ENCODE measurements at regions of chr10 and their contacts with region 1.

Region 1: GRCh38 chr10:30583778-30584415 is 45.7 kb downstream of the LYZL2 start:
- DNase-seq: peak; percentile 9
- H3K4me3 Mint-ChIP-seq: no peak overlapping the region
- H3K27ac Mint-ChIP-seq: no peak overlapping the region
- H3K4me1 Mint-ChIP-seq: peaks cover 5% of the 10 kb centered on the region
- H3K27me3 Mint-ChIP-seq: peaks cover 3% of the 10 kb centered on the region

Region 2: GRCh38 chr10:30392564-30392990 is 191.3 kb before region 1 on chr10:
- CTCF ChIA-PET with region 1: interaction called, 99 read pairs
- POLR2A ChIA-PET with region 1: no interaction called
- intact Hi-C with region 1: no loop called
- DNase-seq: peak; percentile 84
- H3K4me3 Mint-ChIP-seq: peak overlapping the region; percentile 24
- H3K27ac Mint-ChIP-seq: no peak overlapping the region
- H3K4me1 Mint-ChIP-seq: peaks cover 2% of the 10 kb centered on the region
- H3K27me3 Mint-ChIP-seq: peaks cover 18% of the 10 kb centered on the region

Region 3: DNA sequence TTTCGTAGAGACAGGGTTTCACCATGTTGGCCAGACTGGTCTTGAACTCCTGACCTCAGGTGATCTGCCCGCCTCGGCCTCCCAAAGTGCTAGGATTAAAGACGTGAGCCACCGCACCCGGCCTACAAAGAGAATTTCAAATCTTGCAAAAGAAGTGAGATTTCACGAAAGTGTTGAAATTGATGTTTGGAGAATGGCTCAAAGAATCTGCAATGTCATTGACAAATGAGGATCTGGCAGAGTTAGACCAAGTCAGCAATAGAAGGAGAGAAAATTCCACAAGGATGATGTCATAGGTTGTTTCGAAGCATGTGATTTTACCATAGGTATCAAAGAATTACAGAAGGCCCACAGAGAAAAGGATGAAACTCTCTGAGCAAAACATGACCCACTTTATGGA is 26.0 kb before region 1 on chr10:
- CTCF ChIA-PET with region 1: interaction called, 18 read pairs
- POLR2A ChIA-PET with region 1: no interaction called
- intact Hi-C with region 1: no loop called
- DNase-seq: no peak
- H3K4me3 Mint-ChIP-seq: no peak overlapping the region
- H3K27ac Mint-ChIP-seq: no peak overlapping the region
- H3K4me1 Mint-ChIP-seq: peaks cover 5% of the 10 kb centered on the region
- H3K27me3 Mint-ChIP-seq: peaks cover 1% of the 10 kb centered on the region

Region 4: DNA sequence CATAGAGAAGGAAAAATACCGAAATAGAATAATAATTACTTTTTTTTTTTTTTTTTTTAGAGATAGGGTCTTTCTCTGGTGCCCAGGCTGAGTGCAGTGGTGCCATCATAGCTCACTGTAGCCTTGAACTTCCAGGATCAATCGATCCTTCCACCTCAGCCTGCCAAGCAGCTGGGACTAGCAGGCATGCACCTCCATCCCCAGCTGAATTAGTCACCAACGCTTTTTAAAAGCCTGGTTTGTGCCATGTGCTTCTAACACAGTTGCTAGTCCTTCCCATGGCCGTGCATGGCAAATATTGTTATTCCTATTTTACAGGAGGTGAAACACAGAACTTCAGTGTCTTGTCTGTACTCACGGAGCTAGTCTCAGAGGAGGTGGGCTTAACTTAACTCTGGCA is 22.4 kb after region 1 on chr10:
- CTCF ChIA-PET with region 1: interaction called, 14 read pairs
- POLR2A ChIA-PET with region 1: no interaction called
- intact Hi-C with region 1: no loop called
- DNase-seq: no peak
- H3K4me3 Mint-ChIP-seq: no peak overlapping the region
- H3K27ac Mint-ChIP-seq: no peak overlapping the region
- H3K4me1 Mint-ChIP-seq: peaks cover 3% of the 10 kb centered on the region
- H3K27me3 Mint-ChIP-seq: peaks cover 30% of the 10 kb centered on the region

Region 5: GRCh38 chr10:30639946-30640786 is 56.3 kb after region 1 on chr10:
- CTCF ChIA-PET with region 1: interaction called, 11 read pairs
- POLR2A ChIA-PET with region 1: no interaction called
- intact Hi-C with region 1: no loop called
- DNase-seq: no peak
- H3K4me3 Mint-ChIP-seq: no peak overlapping the region
- H3K27ac Mint-ChIP-seq: no peak overlapping the region
- H3K4me1 Mint-ChIP-seq: peaks cover 10% of the 10 kb centered on the region
- H3K27me3 Mint-ChIP-seq: peaks cover 42% of the 10 kb centered on the region

Region 6: GRCh38 chr10:30671026-30671616 is 87.2 kb after region 1 on chr10:
- CTCF ChIA-PET with region 1: interaction called, 14 read pairs
- POLR2A ChIA-PET with region 1: no interaction called
- intact Hi-C with region 1: no loop called
- DNase-seq: no peak
- H3K4me3 Mint-ChIP-seq: peak overlapping the region; percentile 49
- H3K27ac Mint-ChIP-seq: peak overlapping the region; percentile 52
- H3K4me1 Mint-ChIP-seq: peaks cover 31% of the 10 kb centered on the region
- H3K27me3 Mint-ChIP-seq: peaks cover 17% of the 10 kb centered on the region

Region 7: GRCh38 chr10:30784897-30785605 is 201.2 kb after region 1 on chr10:
- CTCF ChIA-PET with region 1: no interaction called
- POLR2A ChIA-PET with region 1: no interaction called
- intact Hi-C with region 1: no loop called
- DNase-seq: peak; percentile 21
- H3K4me3 Mint-ChIP-seq: peak overlapping the region; percentile 62
- H3K27ac Mint-ChIP-seq: no peak overlapping the region
- H3K4me1 Mint-ChIP-seq: peaks cover 22% of the 10 kb centered on the region
- H3K27me3 Mint-ChIP-seq: no peaks in the 10 kb centered on the region

Measured in activated CD4-positive, alpha-beta memory T cell treated with anti-CD3 and anti-CD28 coated beads for 36 hours (primary cell).